ENCODE measurements at regions of chr14 and their contacts with region 1.

Region 1: GRCh38 chr14:54773171-54773975 is 129.3 kb downstream of the GCH1 start:
- DNase-seq: peak; percentile 63 to 79
- ATAC-seq: peak; percentile 80 to 85
- H3K4me3 ChIP-seq: no peak overlapping the region
- H3K27ac ChIP-seq: peak overlapping the region; percentile 83 to 94 (median 88)
- H3K4me1 ChIP-seq: peaks cover 78 to 83% of the 10 kb centered on the region in 2 donors
- H3K27me3 ChIP-seq: no peaks in the 10 kb centered on the region
- CTCF ChIP-seq: peak; percentile 70 to 87 (median 72)
- POLR2A ChIP-seq: no peak

Region 2: DNA sequence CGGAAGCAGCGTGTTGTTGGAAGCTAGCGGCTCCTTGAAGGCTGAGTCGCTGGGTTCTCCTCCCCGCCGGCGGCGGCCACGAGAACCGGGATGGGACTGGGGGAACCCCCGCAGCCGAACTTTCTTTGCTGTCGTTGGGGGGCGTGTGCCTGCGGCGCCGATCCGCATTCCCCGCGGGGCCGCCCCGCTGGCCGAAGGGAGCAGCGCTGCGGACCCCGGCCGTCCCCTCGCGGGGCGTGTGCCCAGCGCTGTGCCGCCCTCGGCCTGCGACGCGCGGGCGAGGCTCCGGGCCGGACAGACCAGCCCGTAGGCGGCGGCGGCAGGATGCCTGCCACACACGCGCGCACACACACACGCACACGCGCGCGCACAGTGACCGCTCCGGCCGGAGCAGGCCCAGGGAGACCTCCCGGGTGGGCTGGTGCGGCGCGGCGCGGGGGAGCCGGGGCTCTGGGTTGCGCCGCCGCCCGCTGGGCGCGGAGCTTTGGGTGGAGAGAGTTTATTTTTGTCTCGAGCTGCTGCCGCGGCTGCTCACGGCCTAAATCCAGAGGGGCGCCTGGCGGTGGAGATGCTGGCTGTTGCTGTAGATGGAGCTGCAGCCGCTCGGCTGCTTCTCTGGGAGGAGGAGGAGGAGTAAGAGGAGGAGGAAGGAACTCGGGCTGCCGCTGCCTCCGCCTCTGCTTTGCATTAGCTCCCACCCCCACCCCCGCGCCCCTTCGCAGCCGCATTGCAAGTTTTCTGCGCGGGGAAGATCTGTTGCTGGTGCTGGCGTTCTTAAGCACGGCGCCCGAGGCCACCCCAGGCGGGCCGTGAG is 206.8 kb before region 1 on chr14 and contains the start of gene SAMD4A:
- in situ Hi-C with region 1: loop called (anchors 5 to 10 kb)
- intact Hi-C with region 1: loop called (anchors 1 kb)
- DNase-seq: peak; percentile 82 to 85
- ATAC-seq: peak; percentile 38 to 53
- H3K4me3 ChIP-seq: peak within 1 kb of the TSS; percentile 67 to 89 (median 81)
- H3K27ac ChIP-seq: peak within 1 kb of the TSS; percentile 97 to 100 (median 99)
- H3K4me1 ChIP-seq: peaks cover 37 to 45% of the 10 kb centered on the region in 2 donors
- H3K27me3 ChIP-seq: no peaks in the 10 kb centered on the region
- CTCF ChIP-seq: peak; percentile 42 to 54 (median 51)
- POLR2A ChIP-seq: peak; percentile 79 to 83
- total RNA-seq, gene SAMD4A: 26.4 to 48.0 (median 42.2) TPM

Region 3: GRCh38 chr14:54652188-54652587 is 121.2 kb before region 1 on chr14:
- in situ Hi-C with region 1: no loop called
- intact Hi-C with region 1: loop called (anchors 2 kb)
- DNase-seq: peak; percentile 74 to 85
- ATAC-seq: peak; percentile 63 to 71
- H3K4me3 ChIP-seq: peak overlapping the region in 3 of 4 donors; percentile 18 to 36 (median 33)
- H3K27ac ChIP-seq: peak overlapping the region; percentile 83 to 85 (median 84)
- H3K4me1 ChIP-seq: peaks cover 68 to 78% of the 10 kb centered on the region in 2 donors
- H3K27me3 ChIP-seq: no peaks in the 10 kb centered on the region
- CTCF ChIP-seq: no peak
- POLR2A ChIP-seq: peak in 1 of 2 donors; percentile 9

Region 4: DNA sequence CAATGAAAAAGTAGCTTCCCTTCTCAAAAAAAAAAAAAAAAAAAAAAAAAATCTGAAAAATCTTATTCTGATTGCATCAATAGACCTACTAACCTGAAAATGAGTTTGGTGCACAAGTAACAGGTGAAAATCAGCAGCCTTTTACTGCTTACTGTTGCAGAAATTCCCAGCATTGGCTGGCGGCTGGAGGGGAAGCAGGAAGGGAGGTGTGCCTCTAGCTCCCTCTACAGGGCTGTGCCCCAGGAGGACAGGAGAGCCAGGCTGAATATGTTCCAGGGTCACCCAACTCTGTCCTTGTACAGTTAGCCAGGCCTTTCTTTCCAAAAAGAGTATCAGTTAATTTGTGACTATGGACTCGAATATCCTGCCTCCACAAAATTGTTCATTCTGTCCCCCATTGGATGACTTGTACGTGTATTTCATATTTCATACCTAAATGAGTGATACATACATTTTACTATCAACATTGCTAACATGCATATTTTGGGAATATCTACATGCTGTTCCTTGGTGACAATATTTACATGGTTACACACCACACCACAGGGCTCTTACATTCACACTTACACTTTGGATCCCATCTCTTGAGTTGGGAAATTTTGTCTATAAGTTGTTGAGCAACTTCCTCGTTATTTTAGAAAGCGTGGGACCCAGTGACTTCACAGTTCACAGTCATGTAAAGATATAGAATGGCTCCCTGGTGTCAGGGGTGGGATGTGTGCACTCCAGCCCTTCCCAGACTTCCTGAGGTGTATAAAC is 81.7 kb before region 1 on chr14:
- in situ Hi-C with region 1: loop called (anchors 5 to 10 kb)
- intact Hi-C with region 1: loop called (anchors 2 kb)
- DNase-seq: peak; percentile 63 to 84
- ATAC-seq: peak; percentile 53 to 71
- H3K4me3 ChIP-seq: no peak overlapping the region
- H3K27ac ChIP-seq: peak overlapping the region; percentile 86 to 99 (median 92)
- H3K4me1 ChIP-seq: peaks cover 62 to 68% of the 10 kb centered on the region in 2 donors
- H3K27me3 ChIP-seq: no peaks in the 10 kb centered on the region
- CTCF ChIP-seq: peak; percentile 82 to 92 (median 89)
- POLR2A ChIP-seq: no peak

Region 5: GRCh38 chr14:54738009-54738408 is 35.4 kb before region 1 on chr14:
- in situ Hi-C with region 1: no loop called
- intact Hi-C with region 1: loop called (anchors 1 kb)
- DNase-seq: peak in 1 of 2 donors; percentile 7
- ATAC-seq: peak in 1 of 2 donors; percentile 59
- H3K4me3 ChIP-seq: no peak overlapping the region
- H3K27ac ChIP-seq: peak overlapping the region; percentile 58 to 69 (median 62)
- H3K4me1 ChIP-seq: peaks cover 33 to 42% of the 10 kb centered on the region in 2 donors
- H3K27me3 ChIP-seq: no peaks in the 10 kb centered on the region
- CTCF ChIP-seq: no peak
- POLR2A ChIP-seq: no peak

Region 6: DNA sequence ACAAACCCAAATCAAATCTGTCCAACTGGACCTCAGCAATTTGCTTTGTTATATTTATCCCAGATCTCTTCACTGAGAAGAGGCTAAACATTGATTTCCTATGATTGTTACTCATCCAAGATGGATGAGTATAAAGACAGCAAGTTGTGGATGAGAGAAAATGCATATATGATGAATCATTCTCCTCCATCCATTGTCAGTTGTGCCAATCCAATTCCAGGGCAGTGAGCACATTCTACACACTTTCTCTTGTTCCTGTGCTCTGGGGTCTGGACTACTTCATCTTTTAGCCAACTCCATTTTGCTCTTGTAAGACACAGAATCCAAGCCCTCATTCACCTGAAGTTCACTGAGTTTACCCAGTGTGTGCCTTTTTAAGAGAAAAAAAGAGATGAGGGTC is 23.6 kb after region 1 on chr14:
- in situ Hi-C with region 1: no loop called
- intact Hi-C with region 1: no loop called
- DNase-seq: no peak
- ATAC-seq: no peak
- H3K4me3 ChIP-seq: no peak overlapping the region
- H3K27ac ChIP-seq: no peak overlapping the region
- H3K4me1 ChIP-seq: no peaks in the 10 kb centered on the region
- H3K27me3 ChIP-seq: no peaks in the 10 kb centered on the region
- CTCF ChIP-seq: no peak
- POLR2A ChIP-seq: no peak